ENCODE measurements at regions of chr17 and their contacts with region 1.

Region 1: DNA sequence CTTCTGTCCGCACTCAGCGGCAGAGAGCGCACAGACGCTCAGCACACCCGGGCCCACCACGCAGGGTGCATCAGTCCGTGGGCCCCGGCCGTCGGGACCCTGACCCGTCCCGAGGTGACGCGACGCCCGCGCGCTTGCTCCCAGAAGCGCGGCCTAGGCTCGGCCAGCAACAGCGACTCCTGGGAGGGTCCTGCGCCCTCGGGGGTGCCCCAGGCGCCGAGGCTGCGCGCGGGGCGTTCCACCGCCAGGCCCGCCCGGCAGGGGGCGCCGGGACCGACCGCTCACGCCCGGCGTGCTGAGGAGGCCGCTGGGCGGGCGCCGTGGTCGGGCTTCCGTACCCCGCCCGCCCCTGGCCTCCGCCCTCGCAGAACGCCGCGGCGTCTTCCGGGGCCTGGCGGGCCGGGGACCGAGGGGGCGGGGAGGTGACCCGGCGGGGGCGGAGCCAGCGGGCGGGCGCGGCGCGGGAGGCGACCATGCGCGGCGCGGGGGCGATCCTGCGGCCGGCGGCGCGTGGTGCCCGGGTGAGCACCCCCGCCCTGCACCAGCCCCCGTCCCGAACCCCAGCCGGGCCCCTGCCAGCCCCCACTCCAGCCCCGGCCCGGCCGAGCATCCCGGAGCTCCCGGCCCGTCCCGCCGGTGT is at the start of gene CISD3:
- DNase-seq: no peak
- ATAC-seq: peak; percentile 93
- H3K4me3 ChIP-seq: peak within 1 kb of the TSS; percentile 69 to 83
- H3K27ac ChIP-seq: peak within 1 kb of the TSS; percentile 90
- H3K4me1 ChIP-seq: peaks cover 32% of the 10 kb centered on the region
- H3K27me3 ChIP-seq: no peaks in the 10 kb centered on the region
- CTCF ChIP-seq: peak; percentile 83
- total RNA-seq, gene CISD3: 45.0 TPM

Region 2: GRCh38 chr17:38674749-38675615 is 55.0 kb before region 1 on chr17 and contains the start of gene EPOP:
- CTCF ChIA-PET with region 1: interaction called, 12 read pairs
- POLR2A ChIA-PET with region 1: no interaction called
- in situ Hi-C with region 1: no loop called
- intact Hi-C with region 1: loop called (anchors 5 kb)
- DNase-seq: no peak
- ATAC-seq: peak; percentile 88
- H3K4me3 ChIP-seq: peak within 1 kb of the TSS; percentile 59 to 62
- H3K27ac ChIP-seq: peak within 1 kb of the TSS; percentile 73
- H3K4me1 ChIP-seq: peaks cover 10% of the 10 kb centered on the region
- H3K27me3 ChIP-seq: no peaks in the 10 kb centered on the region
- CTCF ChIP-seq: no peak
- total RNA-seq, gene EPOP: 19.9 TPM

Region 3: DNA sequence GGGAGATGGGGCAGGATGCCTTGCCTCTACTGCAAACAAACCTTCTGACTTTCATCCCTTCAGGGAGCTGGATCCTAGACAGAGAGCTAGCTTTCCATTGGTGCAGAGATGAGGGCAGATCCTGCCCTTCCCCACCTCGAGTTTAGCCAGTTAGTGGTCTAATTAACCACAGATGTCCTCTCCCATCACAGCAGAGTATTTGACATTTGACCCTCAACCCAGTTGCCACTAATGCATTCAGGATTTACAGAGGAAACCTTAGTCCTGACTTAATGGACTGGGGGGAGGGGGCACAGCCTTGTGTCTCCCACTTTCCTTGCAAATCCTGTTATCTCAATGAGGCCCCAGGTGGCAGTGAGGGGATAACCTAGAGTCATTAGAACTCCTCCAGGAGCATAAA is 59.2 kb after region 1 on chr17:
- CTCF ChIA-PET with region 1: no interaction called
- POLR2A ChIA-PET with region 1: no interaction called
- in situ Hi-C with region 1: no loop called
- intact Hi-C with region 1: no loop called
- DNase-seq: no peak
- ATAC-seq: no peak
- H3K4me3 ChIP-seq: no peak overlapping the region
- H3K27ac ChIP-seq: no peak overlapping the region
- H3K4me1 ChIP-seq: peaks cover 4% of the 10 kb centered on the region; the same call in 1 of the 2 replicates
- H3K27me3 ChIP-seq: no peaks in the 10 kb centered on the region
- CTCF ChIP-seq: no peak

Region 4: DNA sequence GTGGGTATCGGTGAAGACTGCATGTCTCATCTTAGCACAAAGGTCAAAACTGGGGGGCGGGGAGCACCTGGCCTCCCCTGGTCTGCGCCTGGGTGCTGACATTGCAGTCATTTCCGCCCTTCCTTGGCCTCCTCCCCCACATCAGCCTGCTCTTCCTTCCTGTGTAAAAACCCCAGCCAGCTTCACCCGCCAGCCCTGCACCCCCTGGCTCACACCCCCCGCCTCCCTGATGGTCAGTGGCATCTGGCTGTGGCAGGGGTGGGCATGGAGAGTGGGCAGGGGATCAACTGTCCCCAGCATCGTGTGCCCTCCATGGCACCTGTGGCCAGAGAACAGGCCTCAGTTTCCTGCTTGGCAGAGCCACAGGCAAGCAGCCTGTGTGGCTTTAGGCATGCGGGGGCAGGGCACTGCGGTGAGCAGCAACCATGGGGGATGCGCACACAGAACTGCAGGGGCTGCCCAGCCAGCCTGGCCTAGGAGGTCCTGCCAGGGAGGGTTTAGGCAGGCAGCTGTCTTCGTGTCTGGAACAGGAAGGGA is 168.9 kb after region 1 on chr17:
- CTCF ChIA-PET with region 1: no interaction called
- POLR2A ChIA-PET with region 1: no interaction called
- in situ Hi-C with region 1: no loop called
- intact Hi-C with region 1: no loop called
- DNase-seq: no peak
- ATAC-seq: no peak
- H3K4me3 ChIP-seq: no peak overlapping the region
- H3K27ac ChIP-seq: no peak overlapping the region
- H3K4me1 ChIP-seq: peaks cover 27% of the 10 kb centered on the region
- H3K27me3 ChIP-seq: no peaks in the 10 kb centered on the region
- CTCF ChIP-seq: no peak